Caco-2 (cell line): ENCODE measurements at regions of chr7 and their contacts with region 1.

Region 1: GRCh38 chr7:131945313-131945911 is 389.0 kb upstream of the PODXL start:
- DNase-seq: peak; percentile 53 to 74
- H3K4me3 ChIP-seq: no peak overlapping the region
- H3K4me3 Mint-ChIP-seq: no peak overlapping the region
- H3K27ac Mint-ChIP-seq: no peak overlapping the region
- H3K4me1 ChIP-seq: peaks cover 13% of the 10 kb centered on the region
- H3K4me1 Mint-ChIP-seq: peaks cover 6% of the 10 kb centered on the region
- H3K27me3 ChIP-seq: no peaks in the 10 kb centered on the region; the same call in none of the 2 replicates
- H3K27me3 Mint-ChIP-seq: peaks cover 32% of the 10 kb centered on the region
- CTCF ChIP-seq: peak; percentile 94

Region 2: DNA sequence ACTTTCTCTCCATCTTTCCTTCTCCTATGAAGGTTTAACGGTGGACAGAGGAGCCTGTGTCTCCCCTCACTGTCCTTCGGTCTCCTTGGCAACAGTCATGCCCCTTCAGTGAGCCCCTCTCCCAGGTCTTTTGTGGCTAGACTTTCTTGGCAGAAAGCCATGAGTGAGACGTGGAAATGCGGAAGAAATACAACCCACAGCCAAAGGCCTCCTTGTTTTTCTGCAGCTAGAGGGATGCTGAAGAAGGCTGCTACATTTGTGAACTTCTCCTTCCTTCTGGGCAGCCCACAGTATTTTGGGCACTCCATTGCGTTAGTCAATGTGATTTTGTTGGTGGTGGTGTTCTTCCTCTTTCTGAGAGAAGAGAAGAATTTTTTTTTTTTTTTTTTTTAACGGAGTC is 55.2 kb before region 1 on chr7:
- CTCF ChIA-PET with region 1: no interaction called
- POLR2A ChIA-PET with region 1: no interaction called
- intact Hi-C with region 1: no loop called
- DNase-seq: no peak
- H3K4me3 ChIP-seq: no peak overlapping the region
- H3K4me3 Mint-ChIP-seq: no peak overlapping the region
- H3K27ac Mint-ChIP-seq: no peak overlapping the region
- H3K4me1 ChIP-seq: no peaks in the 10 kb centered on the region
- H3K4me1 Mint-ChIP-seq: no peaks in the 10 kb centered on the region
- H3K27me3 ChIP-seq: no peaks in the 10 kb centered on the region
- H3K27me3 Mint-ChIP-seq: peaks cover 31% of the 10 kb centered on the region
- CTCF ChIP-seq: no peak

Region 3: GRCh38 chr7:131974671-131975070 is 29.3 kb after region 1 on chr7:
- CTCF ChIA-PET with region 1: no interaction called
- POLR2A ChIA-PET with region 1: no interaction called
- intact Hi-C with region 1: no loop called
- DNase-seq: no peak
- H3K4me3 ChIP-seq: no peak overlapping the region
- H3K4me3 Mint-ChIP-seq: no peak overlapping the region
- H3K27ac Mint-ChIP-seq: no peak overlapping the region
- H3K4me1 ChIP-seq: no peaks in the 10 kb centered on the region
- H3K4me1 Mint-ChIP-seq: no peaks in the 10 kb centered on the region
- H3K27me3 ChIP-seq: no peaks in the 10 kb centered on the region; the same call in 1 of the 2 replicates
- H3K27me3 Mint-ChIP-seq: peaks cover 10% of the 10 kb centered on the region
- CTCF ChIP-seq: no peak

Region 4: GRCh38 chr7:131995328-131995727 is 49.9 kb after region 1 on chr7:
- CTCF ChIA-PET with region 1: no interaction called
- POLR2A ChIA-PET with region 1: no interaction called
- intact Hi-C with region 1: loop called (anchors 5 kb)
- DNase-seq: no peak
- H3K4me3 ChIP-seq: no peak overlapping the region
- H3K4me3 Mint-ChIP-seq: no peak overlapping the region
- H3K27ac Mint-ChIP-seq: no peak overlapping the region
- H3K4me1 ChIP-seq: no peaks in the 10 kb centered on the region
- H3K4me1 Mint-ChIP-seq: no peaks in the 10 kb centered on the region
- H3K27me3 ChIP-seq: no peaks in the 10 kb centered on the region
- H3K27me3 Mint-ChIP-seq: peaks cover 9% of the 10 kb centered on the region
- CTCF ChIP-seq: no peak

Region 5: GRCh38 chr7:132049462-132050304 is 104.3 kb after region 1 on chr7:
- CTCF ChIA-PET with region 1: interaction called, 3 read pairs
- POLR2A ChIA-PET with region 1: no interaction called
- intact Hi-C with region 1: loop called (anchors 1 kb)
- DNase-seq: peak in 1 of 2 experiments; percentile 63
- H3K4me3 ChIP-seq: no peak overlapping the region
- H3K4me3 Mint-ChIP-seq: no peak overlapping the region
- H3K27ac Mint-ChIP-seq: no peak overlapping the region
- H3K4me1 ChIP-seq: peaks cover 4% of the 10 kb centered on the region; the same call in 1 of the 2 replicates
- H3K4me1 Mint-ChIP-seq: no peaks in the 10 kb centered on the region
- H3K27me3 ChIP-seq: no peaks in the 10 kb centered on the region
- H3K27me3 Mint-ChIP-seq: peaks cover 15% of the 10 kb centered on the region
- CTCF ChIP-seq: peak; percentile 68 to 81

Region 6: GRCh38 chr7:132154248-132154647 is 208.8 kb after region 1 on chr7:
- CTCF ChIA-PET with region 1: no interaction called
- POLR2A ChIA-PET with region 1: no interaction called
- intact Hi-C with region 1: loop called (anchors 2 kb)
- DNase-seq: no peak
- H3K4me3 ChIP-seq: no peak overlapping the region
- H3K4me3 Mint-ChIP-seq: no peak overlapping the region
- H3K27ac Mint-ChIP-seq: no peak overlapping the region
- H3K4me1 ChIP-seq: no peaks in the 10 kb centered on the region
- H3K4me1 Mint-ChIP-seq: no peaks in the 10 kb centered on the region
- H3K27me3 ChIP-seq: peaks cover 2% of the 10 kb centered on the region
- H3K27me3 Mint-ChIP-seq: peaks cover 37% of the 10 kb centered on the region
- CTCF ChIP-seq: no peak

Region 7: DNA sequence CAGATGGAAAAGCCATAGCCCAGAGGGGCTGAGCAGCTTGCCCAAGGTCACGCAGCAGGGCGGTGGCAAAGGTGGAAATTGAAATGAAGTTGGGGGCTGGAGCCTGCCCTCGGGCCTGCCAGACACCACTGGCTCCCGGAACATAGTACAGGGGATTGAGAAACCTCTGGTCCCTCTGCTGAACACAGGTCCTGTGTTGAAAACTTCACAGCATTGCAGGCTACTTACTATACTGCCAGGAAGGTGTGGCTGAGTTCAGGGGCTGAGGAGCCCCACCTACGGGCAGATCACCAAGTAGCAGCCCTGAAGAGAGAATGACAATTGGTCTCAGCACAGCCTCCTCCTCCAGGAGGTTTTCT is 304.2 kb after region 1 on chr7:
- CTCF ChIA-PET with region 1: interaction called, 9 read pairs
- POLR2A ChIA-PET with region 1: no interaction called
- intact Hi-C with region 1: loop called (anchors 1 kb)
- DNase-seq: peak in 1 of 2 experiments; percentile 44
- H3K4me3 ChIP-seq: no peak overlapping the region
- H3K4me3 Mint-ChIP-seq: no peak overlapping the region
- H3K27ac Mint-ChIP-seq: no peak overlapping the region
- H3K4me1 ChIP-seq: peaks cover 5% of the 10 kb centered on the region; the same call in 1 of the 2 replicates
- H3K4me1 Mint-ChIP-seq: peaks cover 8% of the 10 kb centered on the region
- H3K27me3 ChIP-seq: no peaks in the 10 kb centered on the region
- H3K27me3 Mint-ChIP-seq: no peaks in the 10 kb centered on the region
- CTCF ChIP-seq: peak; percentile 25 to 44

Region 8: GRCh38 chr7:132422502-132423111 is 477.2 kb after region 1 on chr7:
- CTCF ChIA-PET with region 1: no interaction called
- POLR2A ChIA-PET with region 1: no interaction called
- intact Hi-C with region 1: no loop called
- DNase-seq: no peak
- H3K4me3 ChIP-seq: no peak overlapping the region
- H3K4me3 Mint-ChIP-seq: no peak overlapping the region
- H3K27ac Mint-ChIP-seq: no peak overlapping the region
- H3K4me1 ChIP-seq: peaks cover 6% of the 10 kb centered on the region
- H3K4me1 Mint-ChIP-seq: peaks cover 8% of the 10 kb centered on the region
- H3K27me3 ChIP-seq: no peaks in the 10 kb centered on the region
- H3K27me3 Mint-ChIP-seq: peaks cover 3% of the 10 kb centered on the region
- CTCF ChIP-seq: no peak

Region 9: DNA sequence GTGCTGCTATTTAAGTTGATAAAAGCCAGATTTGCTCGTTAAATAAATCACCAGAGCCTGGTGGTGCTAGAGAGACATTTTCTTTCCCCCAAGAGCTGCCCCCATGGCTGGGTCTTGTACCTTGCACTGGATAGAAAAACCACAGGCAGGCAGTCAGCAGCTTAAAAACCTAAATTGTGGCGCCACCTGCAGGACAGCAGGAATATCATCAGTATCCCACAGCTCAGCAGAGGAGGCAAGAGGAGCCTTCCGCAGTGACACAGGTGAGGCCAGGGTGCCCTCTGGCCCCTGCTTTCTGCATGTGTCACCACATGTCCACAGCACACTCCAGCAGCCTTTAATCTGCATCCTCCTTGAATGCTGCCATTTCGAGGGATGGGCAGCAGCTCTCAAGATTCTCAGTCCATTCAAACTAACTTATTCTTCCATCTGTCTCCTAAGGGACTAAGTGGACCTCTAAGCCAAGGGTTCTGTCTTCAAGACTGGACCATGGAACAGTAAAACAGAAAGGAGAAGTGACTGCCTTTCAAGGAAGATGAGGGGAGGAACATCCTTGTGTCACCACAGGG is 635.4 kb after region 1 on chr7:
- CTCF ChIA-PET with region 1: no interaction called
- POLR2A ChIA-PET with region 1: no interaction called
- intact Hi-C with region 1: loop called (anchors 1 kb)
- DNase-seq: peak; percentile 78 to 80
- H3K4me3 ChIP-seq: no peak overlapping the region
- H3K4me3 Mint-ChIP-seq: no peak overlapping the region
- H3K27ac Mint-ChIP-seq: no peak overlapping the region
- H3K4me1 ChIP-seq: peaks cover 5% of the 10 kb centered on the region; the same call in 1 of the 2 replicates
- H3K4me1 Mint-ChIP-seq: no peaks in the 10 kb centered on the region
- H3K27me3 ChIP-seq: peaks cover 1% of the 10 kb centered on the region
- H3K27me3 Mint-ChIP-seq: peaks cover 27% of the 10 kb centered on the region
- CTCF ChIP-seq: peak; percentile 76 to 83